Uterus (tissue), 4 donors: ENCODE measurements at regions of chr18 and their contacts with region 1.

Region 1: DNA sequence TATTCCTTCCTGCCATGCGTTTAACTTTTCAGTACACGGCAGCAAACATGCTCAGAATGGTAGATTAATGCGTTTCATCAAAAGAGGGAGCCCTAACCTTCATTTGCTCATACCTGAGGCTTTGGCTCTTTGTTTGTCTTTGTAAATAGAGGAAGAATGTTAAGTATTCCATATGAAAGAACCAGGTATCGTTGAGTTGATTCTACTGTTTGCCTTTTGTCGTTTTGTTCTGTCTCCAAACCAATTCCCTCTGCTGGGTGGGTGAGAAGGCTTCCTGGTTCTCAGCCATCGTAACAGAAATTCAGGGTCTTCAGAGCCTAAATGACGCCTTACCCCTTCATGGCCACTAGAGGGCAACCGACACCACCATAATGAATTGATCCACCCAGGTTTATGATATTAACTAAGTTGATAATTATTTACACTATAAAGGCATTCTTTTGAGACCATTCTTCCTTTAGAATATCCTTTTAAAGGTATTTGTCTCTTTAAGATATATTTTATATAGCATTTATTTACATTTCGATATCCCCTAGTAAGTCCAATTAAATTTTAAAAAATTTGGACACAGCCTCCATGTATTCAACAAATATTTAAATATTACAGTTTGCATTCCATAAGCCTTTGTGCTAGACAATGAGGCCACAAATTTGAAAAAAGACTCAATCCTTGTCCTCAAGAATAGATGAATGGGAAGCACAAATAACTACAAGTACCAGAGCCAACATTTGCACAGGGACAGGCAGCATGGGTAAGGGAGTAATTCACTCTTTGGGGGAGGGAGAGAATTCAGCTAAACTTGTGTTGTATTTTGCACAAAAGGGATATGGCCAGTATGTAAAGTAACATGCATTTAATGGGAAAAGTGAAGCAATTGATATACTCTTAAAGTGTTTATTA is 48.1 kb downstream of the TIMM21 start:
- DNase-seq: peak; percentile 34 to 49
- H3K4me3 ChIP-seq: no peak overlapping the region
- H3K27ac ChIP-seq: no peak overlapping the region
- H3K4me1 ChIP-seq: no peaks in the 10 kb centered on the region
- H3K27me3 ChIP-seq: peaks cover 0 to 3% of the 10 kb centered on the region in 2 donors
- CTCF ChIP-seq: peak; percentile 80 to 92 (median 86)
- POLR2A ChIP-seq: no peak

Region 2: DNA sequence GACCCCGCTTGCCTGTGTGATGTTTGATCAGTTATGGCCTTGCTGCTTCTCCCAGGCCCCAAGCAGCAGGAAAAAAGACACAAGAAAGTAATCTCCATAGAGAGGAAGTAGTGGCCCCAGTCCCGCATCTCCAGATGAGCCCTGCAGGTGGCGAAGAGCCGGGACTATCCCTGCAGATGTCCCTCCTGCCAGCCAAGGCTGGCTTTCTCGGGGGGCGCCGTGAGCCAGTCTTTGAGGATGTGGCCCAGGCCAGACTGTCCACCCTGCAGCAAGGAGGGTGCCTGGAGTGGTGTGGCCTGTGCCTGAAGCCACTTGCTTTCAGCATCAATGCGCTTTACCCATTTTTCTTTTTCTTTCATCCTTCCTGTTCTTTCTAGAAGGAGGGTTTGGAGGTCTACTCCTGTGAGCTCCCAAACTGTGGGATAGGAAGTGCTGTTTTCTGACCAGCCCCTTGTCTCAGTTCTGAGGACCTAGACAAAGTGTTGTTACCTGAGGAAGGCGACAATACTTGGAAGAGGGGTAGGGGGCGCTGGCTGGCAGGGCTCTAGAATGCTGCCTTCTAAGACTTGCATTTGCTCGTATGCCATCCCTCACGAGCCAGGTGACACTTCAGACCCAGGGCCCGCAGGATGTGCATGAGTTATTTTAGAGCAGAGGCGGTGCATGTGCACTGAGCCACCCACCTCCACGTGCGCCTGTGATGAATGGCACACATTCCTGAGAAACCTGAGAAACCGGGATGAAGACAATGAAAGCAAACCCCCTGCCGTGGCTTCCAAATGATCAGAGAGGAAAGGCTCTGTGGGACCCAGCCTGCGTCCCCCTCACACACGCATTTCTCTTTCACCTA is 304.7 kb before region 1 on chr18:
- intact Hi-C with region 1: no loop called
- DNase-seq: no peak
- H3K4me3 ChIP-seq: no peak overlapping the region
- H3K27ac ChIP-seq: no peak overlapping the region
- H3K4me1 ChIP-seq: no peaks in the 10 kb centered on the region
- H3K27me3 ChIP-seq: no peaks in the 10 kb centered on the region
- CTCF ChIP-seq: no peak
- POLR2A ChIP-seq: no peak

Region 3: DNA sequence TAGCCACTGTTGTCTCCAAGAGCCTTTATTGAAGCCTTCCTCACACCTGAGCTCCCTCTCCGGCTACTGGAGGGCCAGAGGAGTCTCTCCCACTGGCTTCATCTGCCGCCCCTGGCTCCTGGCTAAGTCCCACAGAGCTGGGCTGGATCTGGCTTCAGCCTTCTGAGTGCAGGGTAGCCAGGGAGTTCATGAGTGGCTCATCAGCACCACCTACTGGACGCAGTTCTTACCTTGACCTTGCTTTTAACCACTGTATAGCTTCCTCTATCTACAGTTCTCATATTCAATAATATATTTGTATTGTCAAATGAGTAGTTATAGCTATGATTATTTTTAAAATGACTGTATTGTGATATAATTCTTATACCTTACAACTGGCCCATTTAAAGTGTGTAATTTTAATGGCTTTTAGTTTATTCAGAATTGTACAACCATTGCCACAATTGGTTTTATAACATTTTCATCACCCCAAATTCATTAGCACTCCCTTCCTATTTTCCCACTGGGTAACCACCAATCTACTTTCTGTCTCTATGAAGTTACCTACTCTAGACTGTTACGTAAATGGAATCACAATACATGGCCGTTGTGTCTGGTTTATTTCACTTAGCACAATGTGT is 355.6 kb after region 1 on chr18:
- intact Hi-C with region 1: loop called (anchors 10 kb)
- DNase-seq: peak; percentile 67 to 73
- H3K4me3 ChIP-seq: no peak overlapping the region
- H3K27ac ChIP-seq: no peak overlapping the region
- H3K4me1 ChIP-seq: no peaks in the 10 kb centered on the region
- H3K27me3 ChIP-seq: no peaks in the 10 kb centered on the region
- CTCF ChIP-seq: peak; percentile 61 to 72 (median 68)
- POLR2A ChIP-seq: no peak